Testis (tissue), 5 donors: ENCODE measurements at regions of chr19 and their contacts with region 1.

Region 1: GRCh38 chr19:10928525-10929401 is at the starts of genes TIMM29 and YIPF2:
- DNase-seq: peak; percentile 98
- H3K4me3 ChIP-seq: peak within 1 kb of the TSS; percentile 90 to 98
- H3K27ac ChIP-seq: peak within 1 kb of the TSS; percentile 65 to 93
- H3K4me1 ChIP-seq: peaks cover 17% of the 10 kb centered on the region
- H3K27me3 ChIP-seq: no peaks in the 10 kb centered on the region
- CTCF ChIP-seq: no peak
- POLR2A ChIP-seq: peak; percentile 16
- total RNA-seq, gene TIMM29: 40.9 to 45.7 TPM
- total RNA-seq, gene YIPF2: 95.3 to 106 TPM

Region 2: DNA sequence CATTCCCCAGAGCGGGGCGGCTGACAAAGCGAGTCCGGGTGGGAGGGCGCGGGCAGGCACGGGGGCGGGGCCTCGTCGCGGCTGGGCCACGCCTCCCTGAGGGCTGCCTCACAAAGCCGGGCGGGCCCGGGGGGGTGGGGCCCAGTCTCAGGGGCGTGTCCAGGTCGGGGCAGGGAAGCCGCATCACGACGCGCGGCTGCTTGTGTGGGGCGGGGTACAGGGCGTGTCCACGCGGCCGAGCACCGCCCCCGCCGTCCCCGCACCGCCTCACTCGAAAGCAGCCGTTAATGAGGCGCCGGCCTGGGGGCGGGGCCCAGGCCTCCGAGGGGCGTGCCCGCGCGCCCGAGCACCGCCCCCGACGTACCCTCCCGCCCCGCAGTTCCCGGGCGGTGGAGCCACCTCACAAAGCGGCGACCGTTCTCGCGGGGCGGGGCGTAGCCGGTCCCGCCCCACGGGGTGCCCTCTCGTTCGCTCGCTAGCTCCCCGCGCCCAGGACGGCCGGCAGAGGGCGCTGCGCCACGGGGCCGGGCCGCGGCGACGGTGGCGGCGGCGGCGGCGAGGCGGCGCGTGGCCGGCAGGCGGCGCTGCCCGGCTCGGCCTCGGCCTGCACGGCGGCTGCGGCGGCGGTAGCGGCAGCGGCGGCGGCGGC is 57.7 kb before region 1 on chr19 and contains the start of gene CARM1:
- intact Hi-C with region 1: loop called (anchors 10 kb)
- DNase-seq: peak; percentile 99
- H3K4me3 ChIP-seq: peak within 1 kb of the TSS; percentile 72 to 78
- H3K27ac ChIP-seq: peak within 1 kb of the TSS; percentile 77 to 90
- H3K4me1 ChIP-seq: peaks cover 14% of the 10 kb centered on the region
- H3K27me3 ChIP-seq: no peaks in the 10 kb centered on the region
- CTCF ChIP-seq: peak; percentile 45 to 99 (median 90)
- POLR2A ChIP-seq: no peak
- total RNA-seq, gene CARM1: 79.5 to 82.4 TPM

Region 3: GRCh38 chr19:10981252-10981893 is 52.6 kb after region 1 on chr19:
- intact Hi-C with region 1: no loop called
- DNase-seq: no peak
- H3K4me3 ChIP-seq: no peak overlapping the region
- H3K27ac ChIP-seq: no peak overlapping the region
- H3K4me1 ChIP-seq: peaks cover 6% of the 10 kb centered on the region
- H3K27me3 ChIP-seq: no peaks in the 10 kb centered on the region
- CTCF ChIP-seq: no peak
- POLR2A ChIP-seq: no peak